Activated T-helper 1 cell treated with anti-CD3 and anti-CD28 coated beads, Interleukin-12 subunit alpha, Interleukin-12 subunit beta, Interleukin-2, Interleukin-4 antibody, amounts not matched to agents 30 ng/mL and 10 ng/mL and 1 ng/mL, durations not matched to agents 14 hours and 24 hours and 36 hours (primary cell): ENCODE measurements at regions of chr4 and their contacts with region 1.

Region 1: GRCh38 chr4:15882675-15883086 is 55.9 kb downstream of the FGFBP1 start:
- DNase-seq: peak; percentile 11
- H3K4me3 Mint-ChIP-seq: no peak overlapping the region
- H3K27ac Mint-ChIP-seq: no peak overlapping the region
- H3K4me1 Mint-ChIP-seq: no peaks in the 10 kb centered on the region
- H3K27me3 Mint-ChIP-seq: peaks cover 8% of the 10 kb centered on the region

Region 2: GRCh38 chr4:15805583-15806517 is 76.8 kb before region 1 on chr4:
- intact Hi-C with region 1: loop called (anchors 1 kb)
- DNase-seq: no peak
- H3K4me3 Mint-ChIP-seq: no peak overlapping the region
- H3K27ac Mint-ChIP-seq: no peak overlapping the region
- H3K4me1 Mint-ChIP-seq: peaks cover 74% of the 10 kb centered on the region
- H3K27me3 Mint-ChIP-seq: no peaks in the 10 kb centered on the region

Region 3: DNA sequence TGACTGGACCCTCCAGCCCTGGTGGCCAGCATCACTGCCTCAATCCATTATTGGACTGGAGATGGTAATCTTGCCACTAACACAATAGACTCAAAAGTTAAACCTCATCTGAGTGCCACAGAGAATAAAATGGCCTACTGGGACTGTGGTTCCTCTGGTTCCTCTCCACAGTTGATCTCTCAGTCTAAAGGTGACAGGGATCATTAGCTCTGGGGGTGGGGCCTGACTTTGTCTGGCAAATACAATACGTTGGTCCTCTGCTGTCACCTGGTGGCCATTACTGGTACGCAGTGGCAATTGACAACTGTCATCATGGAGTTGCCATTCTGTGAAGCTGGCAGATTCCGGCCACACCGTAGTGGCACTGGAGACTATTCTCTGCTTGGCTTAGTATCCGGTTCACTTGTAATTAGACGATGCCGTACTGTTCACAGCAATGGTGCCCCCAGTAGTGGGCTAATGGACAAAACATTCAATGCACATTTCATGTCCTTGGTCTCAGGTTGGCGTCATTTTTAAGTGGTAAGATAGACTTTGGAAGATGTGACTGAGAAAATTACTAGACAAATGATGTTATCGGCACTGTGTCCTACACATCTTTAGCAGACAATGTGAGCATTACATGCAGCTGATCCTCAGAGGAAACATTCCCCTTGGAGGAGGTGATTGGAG is 73.6 kb after region 1 on chr4:
- intact Hi-C with region 1: loop called (anchors 1 kb)
- DNase-seq: peak; percentile 61
- H3K4me3 Mint-ChIP-seq: no peak overlapping the region
- H3K27ac Mint-ChIP-seq: no peak overlapping the region
- H3K4me1 Mint-ChIP-seq: peaks cover 6% of the 10 kb centered on the region
- H3K27me3 Mint-ChIP-seq: peaks cover 11% of the 10 kb centered on the region

Region 4: DNA sequence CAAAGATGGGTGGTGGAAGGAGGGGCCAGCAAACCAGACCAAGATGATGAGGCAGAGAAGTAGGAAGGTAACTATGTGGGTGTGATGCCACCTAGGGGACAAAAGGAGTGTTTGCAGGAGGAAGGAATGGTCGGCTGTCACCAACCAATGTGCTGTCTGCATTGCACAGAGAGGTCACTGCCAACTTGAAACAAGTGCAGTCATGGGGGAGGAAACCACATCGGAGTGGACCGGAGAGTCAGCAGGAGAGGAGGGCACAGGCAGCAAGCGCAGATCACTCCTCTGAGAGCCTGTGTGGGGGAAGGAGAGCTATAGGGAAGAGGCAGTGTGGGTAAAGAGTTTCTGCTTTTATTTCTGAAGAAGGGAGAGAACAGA is 118.8 kb after region 1 on chr4:
- intact Hi-C with region 1: loop called (anchors 1 kb)
- DNase-seq: peak; percentile 27
- H3K4me3 Mint-ChIP-seq: no peak overlapping the region
- H3K27ac Mint-ChIP-seq: no peak overlapping the region
- H3K4me1 Mint-ChIP-seq: no peaks in the 10 kb centered on the region
- H3K27me3 Mint-ChIP-seq: peaks cover 11% of the 10 kb centered on the region

Region 5: GRCh38 chr4:16264798-16265197 is 382.1 kb after region 1 on chr4:
- intact Hi-C with region 1: loop called (anchors 10 kb)
- DNase-seq: no peak
- H3K4me3 Mint-ChIP-seq: no peak overlapping the region
- H3K27ac Mint-ChIP-seq: no peak overlapping the region
- H3K4me1 Mint-ChIP-seq: no peaks in the 10 kb centered on the region
- H3K27me3 Mint-ChIP-seq: no peaks in the 10 kb centered on the region